ENCODE measurements at regions of chr4 and their contacts with region 1.

Region 1: GRCh38 chr4:931960-932712 is at the starts of genes GAK and TMEM175:
- DNase-seq: peak; percentile 86
- ATAC-seq: peak; percentile 94
- H3K4me3 ChIP-seq: peak within 1 kb of the TSS; percentile 84 to 100 (median 97)
- H3K27ac ChIP-seq: peak within 1 kb of the TSS; percentile 84
- H3K4me1 ChIP-seq: peaks cover 35% of the 10 kb centered on the region
- H3K27me3 ChIP-seq: no peaks in the 10 kb centered on the region; a peak in 1 of 5 replicates
- CTCF ChIP-seq: no peak
- EP300 ChIP-seq: no peak
- POLR2A ChIP-seq: peak in 1 of 2 experiments; percentile 89; a peak in 2 of 4 replicates
- RAD21 ChIP-seq: 0 out of 2 replicates have a peak, but pooled peaks have one; percentile 26
- total RNA-seq, gene GAK: 28.0 and 44.3 TPM in 2 replicates
- total RNA-seq, gene TMEM175: 1.6 and 5.1 TPM in 2 replicates

Region 2: GRCh38 chr4:781493-782216 is 150.5 kb before region 1 on chr4:
- CTCF ChIA-PET with region 1: no interaction called
- POLR2A ChIA-PET with region 1: interaction called, 5 read pairs
- in situ Hi-C with region 1: no loop called
- intact Hi-C with region 1: loop called (anchors 5 kb)
- DNase-seq: peak; percentile 97
- ATAC-seq: peak; percentile 92
- H3K4me3 ChIP-seq: peak overlapping the region; percentile 87 to 99 (median 94)
- H3K27ac ChIP-seq: peak overlapping the region; percentile 94
- H3K4me1 ChIP-seq: peaks cover 59% of the 10 kb centered on the region
- H3K27me3 ChIP-seq: no peaks in the 10 kb centered on the region; a peak in 1 of 5 replicates
- CTCF ChIP-seq: no peak
- EP300 ChIP-seq: no peak
- POLR2A ChIP-seq: peak in 1 of 2 experiments; percentile 95; a peak in 2 of 4 replicates
- RAD21 ChIP-seq: 0 out of 2 replicates have a peak, but pooled peaks have one; percentile 46

Region 3: GRCh38 chr4:986879-987623 is 54.9 kb after region 1 on chr4 and contains the start of gene IDUA:
- CTCF ChIA-PET with region 1: no interaction called
- POLR2A ChIA-PET with region 1: interaction called, 25 read pairs
- in situ Hi-C with region 1: loop called (anchors 5 kb)
- intact Hi-C with region 1: loop called (anchors 2 kb)
- DNase-seq: peak; percentile 74
- ATAC-seq: peak; percentile 73
- H3K4me3 ChIP-seq: peak within 1 kb of the TSS; percentile 54 to 75 (median 55)
- H3K27ac ChIP-seq: peak within 1 kb of the TSS; percentile 64
- H3K4me1 ChIP-seq: peaks cover 44% of the 10 kb centered on the region
- H3K27me3 ChIP-seq: peaks cover 0 to 8% of the 10 kb centered on the region in 2 experiments; a peak in 1 of 5 replicates
- CTCF ChIP-seq: peak; percentile 79
- EP300 ChIP-seq: 0 out of 4 replicates have a peak, but pooled peaks of 1 of the 2 experiments have one; percentile 14
- POLR2A ChIP-seq: peak in 1 of 2 experiments; percentile 37; a peak in 2 of 4 replicates
- RAD21 ChIP-seq: peak; percentile 91
- total RNA-seq, gene IDUA: 0.32 and 1.0 TPM in 2 replicates

Region 4: DNA sequence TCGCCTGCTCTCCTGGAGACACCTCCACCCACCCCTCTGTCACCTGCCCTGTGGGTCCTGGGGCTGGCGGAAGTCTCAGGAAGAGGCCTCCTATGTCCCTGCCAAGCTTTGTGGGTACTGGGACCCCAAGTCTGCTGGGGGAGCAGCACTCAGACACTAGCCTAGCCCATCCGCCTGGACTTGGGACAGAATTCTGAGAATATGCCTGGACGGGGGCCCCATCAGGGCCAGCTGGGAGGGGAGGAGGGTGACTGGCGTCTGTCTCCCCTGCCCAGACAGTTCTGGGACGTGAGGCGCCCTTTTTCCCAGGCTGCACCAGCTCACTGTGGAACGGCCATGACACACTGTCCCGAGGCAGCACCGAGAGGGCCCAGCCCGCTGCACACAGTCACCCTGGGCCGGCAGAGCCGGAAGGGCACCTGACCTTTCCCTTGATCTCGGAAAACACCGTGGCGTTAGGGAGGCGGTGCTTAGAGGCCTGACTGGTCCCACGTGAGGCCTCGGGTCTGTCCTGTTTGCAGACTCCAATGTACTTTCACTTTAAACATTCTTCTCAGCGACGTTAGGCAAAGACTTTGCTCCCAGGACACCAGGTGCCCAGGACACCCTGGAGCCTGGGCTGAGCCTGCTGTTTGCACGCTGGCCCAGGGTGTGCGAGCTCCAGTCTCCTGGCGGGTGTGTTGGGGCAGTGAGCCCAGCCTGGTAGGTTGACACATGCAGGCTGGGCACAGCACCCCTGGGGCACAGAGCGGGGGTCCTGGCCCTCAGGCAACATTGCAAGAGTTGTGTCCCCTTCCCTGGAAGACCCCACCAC is 60.4 kb after region 1 on chr4:
- CTCF ChIA-PET with region 1: no interaction called
- POLR2A ChIA-PET with region 1: interaction called, 25 read pairs
- in situ Hi-C with region 1: loop called (anchors 5 kb)
- intact Hi-C with region 1: loop called (anchors 2 kb)
- DNase-seq: peak; percentile 98
- ATAC-seq: peak; percentile 81
- H3K4me3 ChIP-seq: peak overlapping the region; percentile 61 to 85 (median 77)
- H3K27ac ChIP-seq: peak overlapping the region; percentile 99
- H3K4me1 ChIP-seq: peaks cover 56% of the 10 kb centered on the region
- H3K27me3 ChIP-seq: peaks cover 0 to under 1% of the 10 kb centered on the region in 2 experiments; a peak in 2 of 5 replicates
- CTCF ChIP-seq: peak; percentile 31; the same call in 1 of the 2 replicates
- EP300 ChIP-seq: peak; percentile 63 to 75; a peak in 3 of 4 replicates
- POLR2A ChIP-seq: peak in 1 of 2 experiments; percentile 91; a peak in 2 of 4 replicates
- RAD21 ChIP-seq: peak; percentile 42